B cell (primary cell): ENCODE measurements at regions of chr5 and their contacts with region 1.

Region 1: DNA sequence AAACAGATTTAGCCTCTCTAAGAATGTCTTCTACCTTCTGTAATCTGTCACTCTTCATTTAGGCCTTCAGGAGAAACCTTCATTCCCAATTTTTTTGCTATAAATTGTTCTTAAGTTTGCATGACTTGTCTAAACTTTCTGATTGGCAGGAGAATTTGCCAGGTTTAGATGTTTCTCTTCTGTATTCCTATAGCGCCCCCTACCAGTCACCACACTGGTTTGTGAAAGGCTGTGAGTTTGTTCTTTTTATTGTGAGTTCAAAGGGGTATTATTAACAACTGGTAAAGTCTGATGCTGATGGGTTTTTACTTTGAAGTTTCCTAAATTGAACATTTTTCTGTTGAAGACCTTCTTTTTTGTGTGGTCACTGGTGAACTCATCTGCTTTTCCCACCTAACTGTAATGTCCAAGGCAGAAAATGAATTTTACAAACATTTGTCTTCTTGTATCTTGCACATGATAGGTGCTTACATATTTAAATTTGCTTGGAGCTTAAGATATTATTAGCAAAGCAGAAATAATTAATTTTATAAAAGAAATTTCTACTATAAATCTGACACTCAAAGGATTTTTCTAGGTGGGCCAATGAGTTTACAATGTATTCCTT is 18.4 kb upstream of the F2RL2 start:
- DNase-seq: peak; percentile 61
- ATAC-seq: no peak
- H3K4me3 ChIP-seq: no peak overlapping the region
- H3K4me3 Mint-ChIP-seq: no peak overlapping the region
- H3K27ac ChIP-seq: no peak overlapping the region
- H3K27ac Mint-ChIP-seq: no peak overlapping the region
- H3K4me1 ChIP-seq: peaks cover 8% of the 10 kb centered on the region in 2 donors
- H3K4me1 Mint-ChIP-seq: peaks cover 7% of the 10 kb centered on the region
- H3K27me3 ChIP-seq: no peaks in the 10 kb centered on the region
- H3K27me3 Mint-ChIP-seq: no peaks in the 10 kb centered on the region
- CTCF ChIP-seq: peak; percentile 71

Region 2: GRCh38 chr5:75734913-75735789 is 906.5 kb before region 1 on chr5:
- CTCF ChIA-PET with region 1: no interaction called
- POLR2A ChIA-PET with region 1: no interaction called
- intact Hi-C with region 1: loop called (anchors 10 kb)
- DNase-seq: peak; percentile 62
- ATAC-seq: no peak
- H3K4me3 ChIP-seq: no peak overlapping the region
- H3K4me3 Mint-ChIP-seq: no peak overlapping the region
- H3K27ac ChIP-seq: no peak overlapping the region
- H3K27ac Mint-ChIP-seq: no peak overlapping the region
- H3K4me1 ChIP-seq: no peaks in the 10 kb centered on the region
- H3K4me1 Mint-ChIP-seq: no peaks in the 10 kb centered on the region
- H3K27me3 ChIP-seq: no peaks in the 10 kb centered on the region
- H3K27me3 Mint-ChIP-seq: peaks cover 13% of the 10 kb centered on the region
- CTCF ChIP-seq: peak; percentile 69

Region 3: DNA sequence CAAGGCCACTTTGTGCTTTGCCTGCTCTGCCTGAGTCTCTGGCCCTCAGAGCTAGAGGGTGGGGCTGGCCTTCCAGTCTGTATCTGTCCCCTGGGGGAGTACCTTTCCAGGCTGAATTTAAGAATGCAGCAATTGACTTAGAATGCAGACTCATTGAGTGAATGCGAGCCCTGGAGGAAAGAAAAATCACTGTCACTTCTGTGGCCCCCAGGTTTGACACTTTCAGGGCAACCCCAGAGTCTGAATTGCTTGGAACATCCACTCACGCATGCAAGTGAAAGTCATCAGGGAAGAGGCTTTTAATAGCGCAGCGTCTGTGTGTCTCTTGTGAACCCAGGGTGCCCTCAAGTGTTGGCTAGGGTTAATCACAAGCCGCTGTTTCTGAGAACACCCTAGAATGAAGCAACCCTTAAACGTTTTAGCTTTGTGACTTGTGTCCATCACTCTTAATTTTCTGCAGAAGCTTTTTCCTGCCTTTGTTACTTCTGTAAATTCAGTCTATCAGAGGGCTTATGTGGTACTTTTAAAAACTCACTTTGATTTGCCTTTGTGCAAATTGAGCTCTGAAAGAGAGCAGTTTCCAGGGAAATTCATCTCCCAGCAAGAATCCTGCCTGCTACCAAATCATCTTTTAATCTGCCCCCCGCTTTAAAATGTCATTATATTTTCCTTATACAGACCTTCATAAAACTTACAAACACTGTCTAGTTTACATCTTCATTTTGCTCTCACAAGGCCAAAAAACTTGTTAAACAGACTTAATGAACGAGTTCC is 385.3 kb before region 1 on chr5:
- CTCF ChIA-PET with region 1: no interaction called
- POLR2A ChIA-PET with region 1: no interaction called
- intact Hi-C with region 1: no loop called
- DNase-seq: peak; percentile 66
- ATAC-seq: peak; percentile 54
- H3K4me3 ChIP-seq: no peak overlapping the region
- H3K4me3 Mint-ChIP-seq: no peak overlapping the region
- H3K27ac ChIP-seq: no peak overlapping the region
- H3K27ac Mint-ChIP-seq: no peak overlapping the region
- H3K4me1 ChIP-seq: peaks cover 0 to 4% of the 10 kb centered on the region in 2 donors
- H3K4me1 Mint-ChIP-seq: peaks cover 3% of the 10 kb centered on the region
- H3K27me3 ChIP-seq: peaks cover 0 to 9% (median 3%) of the 10 kb centered on the region in 4 experiments
- H3K27me3 Mint-ChIP-seq: peaks cover 19% of the 10 kb centered on the region
- CTCF ChIP-seq: peak; percentile 64

Region 4: DNA sequence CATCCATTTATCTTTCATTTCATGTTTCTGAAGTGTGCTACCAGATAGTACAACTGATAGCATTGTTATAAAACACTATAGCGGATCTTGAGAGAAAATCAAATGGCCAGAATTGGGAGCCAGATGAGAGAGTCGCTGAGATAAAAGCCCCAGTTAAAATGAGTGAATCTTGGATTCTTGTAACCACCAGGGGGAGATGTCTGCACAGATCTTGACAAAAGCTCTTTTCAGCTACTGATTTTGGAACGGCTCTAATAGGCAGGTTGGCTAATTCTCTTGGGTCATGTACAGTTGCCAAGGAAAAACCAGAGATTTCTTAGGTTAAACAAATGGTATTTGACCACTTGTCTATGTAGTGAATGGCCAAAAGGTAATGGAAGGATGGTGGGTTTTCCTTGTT is 40.1 kb before region 1 on chr5:
- CTCF ChIA-PET with region 1: interaction called, 3 read pairs
- POLR2A ChIA-PET with region 1: no interaction called
- intact Hi-C with region 1: loop called (anchors 1 kb)
- DNase-seq: peak; percentile 67
- ATAC-seq: peak; percentile 47
- H3K4me3 ChIP-seq: no peak overlapping the region
- H3K4me3 Mint-ChIP-seq: no peak overlapping the region
- H3K27ac ChIP-seq: no peak overlapping the region
- H3K27ac Mint-ChIP-seq: no peak overlapping the region
- H3K4me1 ChIP-seq: no peaks in the 10 kb centered on the region
- H3K4me1 Mint-ChIP-seq: no peaks in the 10 kb centered on the region
- H3K27me3 ChIP-seq: no peaks in the 10 kb centered on the region
- H3K27me3 Mint-ChIP-seq: no peaks in the 10 kb centered on the region
- CTCF ChIP-seq: peak; percentile 78